Naive thymus-derived CD4-positive, alpha-beta T cell (primary cell): ENCODE measurements at regions of chr12 and their contacts with region 1.

Region 1: DNA sequence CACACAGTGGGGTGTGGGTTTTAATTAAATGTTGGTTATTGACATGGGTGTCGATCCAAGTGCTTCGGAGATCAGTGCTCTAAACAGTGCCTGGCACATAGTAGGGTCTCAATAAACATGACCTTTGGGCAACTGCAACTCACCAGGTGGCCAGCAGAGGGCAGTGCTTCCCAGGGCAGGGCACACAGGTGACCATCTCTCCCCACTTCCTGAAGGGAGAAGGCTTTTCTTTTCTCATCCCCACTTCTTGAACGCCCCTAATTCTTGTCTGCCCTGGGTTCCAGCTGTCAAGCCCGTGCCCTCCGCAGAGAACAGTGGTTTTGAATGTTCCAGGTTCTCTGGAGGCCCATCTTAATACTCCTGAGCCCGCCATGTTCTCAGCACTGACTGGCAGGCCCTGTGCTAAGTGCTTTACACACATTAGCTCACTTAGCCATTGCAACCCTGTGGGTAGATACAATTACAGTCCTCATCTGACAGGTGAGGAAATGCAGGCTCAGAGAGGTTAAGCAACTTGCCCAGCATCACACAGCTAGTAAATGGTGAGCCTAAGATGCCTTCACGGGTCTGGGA is 16.3 kb downstream of the RAPGEF3 start:
- DNase-seq: peak; percentile 41 to 84 (median 58)
- ATAC-seq: peak; percentile 65
- H3K4me3 ChIP-seq: no peak overlapping the region
- H3K4me3 Mint-ChIP-seq: peak overlapping the region in 2 of 10 donors; percentile 18 to 35
- H3K27ac ChIP-seq: no peak overlapping the region
- H3K27ac Mint-ChIP-seq: peak overlapping the region in 1 of 9 donors; percentile 44
- H3K4me1 ChIP-seq: peaks cover 13 to 14% of the 10 kb centered on the region in 2 donors
- H3K4me1 Mint-ChIP-seq: peaks cover 10 to 44% (median 29%) of the 10 kb centered on the region in 7 donors
- H3K27me3 ChIP-seq: no peaks in the 10 kb centered on the region
- H3K27me3 Mint-ChIP-seq: peaks cover 0 to 17% (median 0%) of the 10 kb centered on the region in 5 donors

Region 2: GRCh38 chr12:47686645-47687240 is 55.6 kb before region 1 on chr12:
- CTCF ChIA-PET with region 1: no interaction called
- POLR2A ChIA-PET with region 1: no interaction called
- intact Hi-C with region 1: no loop called
- DNase-seq: peak in 7 of 9 donors; percentile 21 to 53 (median 43)
- ATAC-seq: peak; percentile 76
- H3K4me3 ChIP-seq: no peak overlapping the region
- H3K4me3 Mint-ChIP-seq: no peak overlapping the region
- H3K27ac ChIP-seq: no peak overlapping the region
- H3K27ac Mint-ChIP-seq: no peak overlapping the region
- H3K4me1 ChIP-seq: peaks cover 0 to 3% of the 10 kb centered on the region in 2 donors
- H3K4me1 Mint-ChIP-seq: peaks cover 9 to 19% (median 14%) of the 10 kb centered on the region in 7 donors
- H3K27me3 ChIP-seq: no peaks in the 10 kb centered on the region
- H3K27me3 Mint-ChIP-seq: no peaks in the 10 kb centered on the region

Region 3: GRCh38 chr12:47721431-47721973 is 20.8 kb before region 1 on chr12:
- CTCF ChIA-PET with region 1: interaction called, 67 read pairs
- POLR2A ChIA-PET with region 1: interaction called, 3 read pairs
- intact Hi-C with region 1: no loop called
- DNase-seq: no peak
- ATAC-seq: no peak
- H3K4me3 ChIP-seq: no peak overlapping the region
- H3K4me3 Mint-ChIP-seq: peak overlapping the region in 1 of 10 donors; percentile 2
- H3K27ac ChIP-seq: no peak overlapping the region
- H3K27ac Mint-ChIP-seq: peak overlapping the region in 4 of 9 donors; percentile 14 to 38 (median 20)
- H3K4me1 ChIP-seq: peaks cover 15 to 17% of the 10 kb centered on the region in 2 donors
- H3K4me1 Mint-ChIP-seq: peaks cover 24 to 39% (median 32%) of the 10 kb centered on the region in 7 donors
- H3K27me3 ChIP-seq: no peaks in the 10 kb centered on the region
- H3K27me3 Mint-ChIP-seq: no peaks in the 10 kb centered on the region

Region 4: DNA sequence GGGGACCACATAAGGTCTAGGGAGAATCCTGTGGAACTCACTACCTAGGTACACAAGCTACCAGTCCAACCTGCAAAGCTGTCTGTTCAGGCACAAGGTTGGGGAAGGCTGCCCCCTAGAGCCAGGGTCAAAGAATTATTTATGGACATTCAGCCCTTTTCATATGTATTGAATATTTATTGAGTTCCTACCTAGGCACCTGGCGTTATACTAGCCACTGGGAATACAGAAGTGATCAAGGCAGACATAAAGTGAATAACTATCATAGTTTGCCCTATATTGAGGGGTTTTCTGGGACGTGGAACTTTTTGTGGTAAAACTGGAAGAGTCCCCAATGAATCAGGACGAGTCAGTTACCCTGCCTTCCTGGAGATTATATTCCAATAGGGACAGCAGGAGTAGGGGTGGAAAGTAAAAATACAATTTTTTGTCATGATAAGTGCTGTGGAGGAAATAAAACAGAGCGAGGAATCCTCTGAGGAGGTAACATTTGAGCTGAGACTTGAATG is 24.9 kb after region 1 on chr12:
- CTCF ChIA-PET with region 1: interaction called, 346 read pairs
- POLR2A ChIA-PET with region 1: interaction called, 11 read pairs
- intact Hi-C with region 1: loop called (anchors 1 kb)
- DNase-seq: peak; percentile 40 to 73 (median 57)
- ATAC-seq: peak; percentile 81
- H3K4me3 ChIP-seq: no peak overlapping the region
- H3K4me3 Mint-ChIP-seq: no peak overlapping the region
- H3K27ac ChIP-seq: no peak overlapping the region
- H3K27ac Mint-ChIP-seq: no peak overlapping the region
- H3K4me1 ChIP-seq: peaks cover 3 to 10% of the 10 kb centered on the region in 2 donors
- H3K4me1 Mint-ChIP-seq: peaks cover 0 to 16% (median 5%) of the 10 kb centered on the region in 7 donors
- H3K27me3 ChIP-seq: no peaks in the 10 kb centered on the region
- H3K27me3 Mint-ChIP-seq: peaks cover 0 to 13% (median 0%) of the 10 kb centered on the region in 5 donors

Region 5: DNA sequence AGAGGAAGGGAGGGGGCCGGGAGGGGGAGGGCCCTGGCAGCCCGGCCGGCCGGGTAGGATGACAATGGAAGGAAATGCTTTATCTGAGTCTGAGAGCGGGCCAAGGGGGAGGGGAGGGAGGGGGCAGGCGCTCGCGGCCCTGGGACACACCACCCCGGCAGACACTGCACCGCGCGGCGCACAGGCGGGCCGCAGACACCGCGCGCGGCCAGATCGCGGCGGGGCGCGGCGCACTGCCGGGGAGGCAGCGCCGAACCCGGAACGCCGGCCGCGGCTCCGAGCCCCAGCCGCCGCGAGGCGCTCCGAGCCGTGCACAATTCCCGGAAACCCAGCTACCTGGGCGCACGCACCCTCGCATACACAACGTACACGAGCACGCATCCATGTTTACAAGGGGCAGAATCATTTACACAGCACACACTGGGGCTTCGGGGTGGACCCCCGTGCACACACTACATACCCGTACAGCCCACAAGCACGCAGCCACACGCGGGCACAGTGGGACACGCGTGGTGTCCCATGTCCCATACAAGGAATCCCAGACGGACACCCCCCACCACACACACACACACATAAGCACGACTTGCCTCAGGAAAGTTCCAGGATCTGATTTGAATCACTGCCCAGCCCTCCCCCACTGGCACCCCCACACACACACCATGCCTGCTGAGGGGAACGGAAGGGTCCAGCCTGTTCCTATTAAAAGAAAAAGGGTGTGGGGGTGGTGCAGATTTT is 77.7 kb after region 1 on chr12 and contains the start of gene HDAC7:
- CTCF ChIA-PET with region 1: interaction called, 16 read pairs
- POLR2A ChIA-PET with region 1: interaction called, 4 read pairs
- intact Hi-C with region 1: no loop called
- DNase-seq: peak; percentile 54 to 79 (median 69)
- ATAC-seq: peak; percentile 76
- H3K4me3 ChIP-seq: peak within 1 kb of the TSS; percentile 82
- H3K4me3 Mint-ChIP-seq: peak within 1 kb of the TSS; percentile 86 to 99 (median 96)
- H3K27ac ChIP-seq: peak within 1 kb of the TSS; percentile 88
- H3K27ac Mint-ChIP-seq: peak within 1 kb of the TSS; percentile 96 to 99 (median 97)
- H3K4me1 ChIP-seq: peaks cover 55 to 73% of the 10 kb centered on the region in 2 donors
- H3K4me1 Mint-ChIP-seq: peaks cover 75 to 87% (median 82%) of the 10 kb centered on the region in 7 donors
- H3K27me3 ChIP-seq: no peaks in the 10 kb centered on the region
- H3K27me3 Mint-ChIP-seq: no peaks in the 10 kb centered on the region
- total RNA-seq, gene HDAC7: 150 to 194 (median 188) TPM

Region 6: GRCh38 chr12:47837190-47838171 is 95.1 kb after region 1 on chr12:
- CTCF ChIA-PET with region 1: interaction called, 330 read pairs
- POLR2A ChIA-PET with region 1: interaction called, 8 read pairs
- intact Hi-C with region 1: loop called (anchors 1 kb)
- DNase-seq: peak; percentile 52 to 80 (median 65)
- ATAC-seq: peak; percentile 68
- H3K4me3 ChIP-seq: no peak overlapping the region
- H3K4me3 Mint-ChIP-seq: no peak overlapping the region
- H3K27ac ChIP-seq: no peak overlapping the region
- H3K27ac Mint-ChIP-seq: peak overlapping the region in 8 of 9 donors; percentile 35 to 97 (median 76)
- H3K4me1 ChIP-seq: peaks cover 19 to 52% of the 10 kb centered on the region in 2 donors
- H3K4me1 Mint-ChIP-seq: peaks cover 38 to 71% (median 55%) of the 10 kb centered on the region in 7 donors
- H3K27me3 ChIP-seq: no peaks in the 10 kb centered on the region
- H3K27me3 Mint-ChIP-seq: no peaks in the 10 kb centered on the region

Region 7: DNA sequence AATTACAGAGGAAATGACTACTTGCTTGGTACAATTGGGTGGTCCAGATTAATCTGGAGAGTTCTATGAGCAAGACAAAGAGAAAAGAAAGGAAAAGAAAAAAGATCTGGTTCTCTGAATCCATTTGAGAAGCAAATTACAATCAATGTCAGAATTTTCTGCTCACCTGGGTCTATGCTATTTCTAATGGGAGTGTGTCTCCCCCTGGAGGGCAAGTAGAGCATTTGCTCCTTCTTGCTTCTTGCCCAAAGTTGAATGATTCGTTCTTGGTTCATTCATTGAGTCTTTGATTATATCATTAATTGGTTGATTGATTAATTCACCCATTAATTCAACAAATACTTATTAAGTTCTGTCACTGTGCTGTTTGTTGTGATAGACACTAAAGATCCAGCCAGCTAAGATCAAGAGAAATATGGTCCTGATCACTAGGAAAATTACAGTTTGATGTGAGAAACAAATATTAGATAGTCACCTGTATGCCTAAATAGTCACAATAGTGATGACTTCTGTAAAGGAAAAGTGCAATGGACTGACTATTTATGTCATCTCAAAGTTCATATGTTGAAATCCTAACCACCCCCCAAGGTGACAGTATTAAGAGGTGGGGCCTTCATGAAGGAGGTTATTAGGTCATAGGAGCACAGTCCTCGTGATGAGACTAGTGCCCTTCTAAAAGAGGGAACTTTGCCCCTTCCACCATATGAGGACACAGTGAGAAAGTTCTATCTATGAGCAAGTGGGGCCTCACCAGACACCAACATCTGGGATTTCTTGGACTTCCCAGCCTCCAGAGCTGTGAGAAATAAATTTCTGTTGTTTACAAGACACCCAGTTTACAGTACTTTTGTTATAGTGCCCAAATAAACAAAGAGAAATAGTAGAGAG is 423.0 kb after region 1 on chr12:
- CTCF ChIA-PET with region 1: interaction called, 3 read pairs
- POLR2A ChIA-PET with region 1: no interaction called
- intact Hi-C with region 1: loop called in 1 of 2 experiments (anchors 1 kb)
- DNase-seq: peak in 7 of 9 donors; percentile 54 to 77 (median 70)
- ATAC-seq: peak; percentile 87
- H3K4me3 ChIP-seq: no peak overlapping the region
- H3K4me3 Mint-ChIP-seq: no peak overlapping the region
- H3K27ac ChIP-seq: no peak overlapping the region
- H3K27ac Mint-ChIP-seq: no peak overlapping the region
- H3K4me1 ChIP-seq: no peaks in the 10 kb centered on the region
- H3K4me1 Mint-ChIP-seq: peaks cover 2 to 16% (median 14%) of the 10 kb centered on the region in 7 donors
- H3K27me3 ChIP-seq: no peaks in the 10 kb centered on the region
- H3K27me3 Mint-ChIP-seq: peaks cover 0 to 33% (median 12%) of the 10 kb centered on the region in 5 donors